ENCODE measurements at regions of chr5 and their contacts with region 1.

Region 1: DNA sequence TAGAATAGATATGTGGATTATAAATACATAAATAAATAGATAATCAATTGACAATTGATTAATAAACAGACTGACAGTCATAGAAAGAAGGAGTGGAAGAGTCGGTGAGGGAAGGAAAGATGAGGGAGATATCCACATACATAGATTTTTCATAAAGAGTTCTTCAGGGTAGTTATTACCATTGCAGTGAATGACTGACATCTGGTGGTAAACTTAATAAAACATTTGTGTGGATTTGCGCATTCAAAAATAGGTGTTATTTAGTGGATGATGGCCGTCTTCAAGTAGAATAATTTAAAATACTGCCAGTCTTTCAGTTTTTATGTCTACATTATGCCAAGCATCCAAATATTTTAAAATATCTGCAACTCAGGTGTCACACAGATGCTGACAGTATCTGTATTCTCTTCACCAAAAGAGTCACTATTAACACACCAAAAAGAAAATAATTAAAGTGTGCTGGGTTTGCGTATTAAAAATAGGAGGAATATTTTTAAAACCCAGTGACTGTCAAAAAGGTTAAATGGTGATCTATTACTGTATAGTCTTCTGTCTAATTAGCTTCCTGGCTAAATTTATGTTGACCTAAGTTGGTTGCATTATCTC is 78.8 kb downstream of the GIN1 start:
- DNase-seq: no peak
- H3K4me3 ChIP-seq: no peak overlapping the region
- H3K27ac ChIP-seq: no peak overlapping the region
- H3K4me1 ChIP-seq: peaks cover 0 to 3% of the 10 kb centered on the region in 2 donors
- H3K27me3 ChIP-seq: no peaks in the 10 kb centered on the region
- CTCF ChIP-seq: peak; percentile 31 to 75 (median 56)
- POLR2A ChIP-seq: no peak

Region 2: DNA sequence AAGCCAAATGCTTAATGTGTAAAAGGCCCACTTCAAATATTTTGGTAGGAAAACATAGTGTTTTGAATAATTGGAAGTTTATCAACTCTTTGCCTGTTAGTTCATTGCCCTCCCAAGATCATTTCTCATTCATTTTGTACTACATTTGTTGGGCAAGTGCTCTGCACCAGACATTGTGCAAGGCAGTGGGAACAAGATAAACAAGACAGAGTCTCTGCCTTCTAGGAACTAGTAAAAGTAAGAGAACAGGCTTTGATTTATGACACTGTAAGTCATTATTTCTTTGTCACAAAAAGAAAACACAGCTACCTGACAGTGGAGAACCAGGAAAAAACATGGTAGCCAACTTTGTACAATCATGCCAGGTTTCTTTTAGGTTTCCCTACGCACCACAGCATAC is 349.7 kb before region 1 on chr5:
- intact Hi-C with region 1: loop called in 1 of 2 experiments (anchors 10 kb)
- DNase-seq: peak in 4 of 7 donors; percentile 18 to 61 (median 39)
- H3K4me3 ChIP-seq: no peak overlapping the region
- H3K27ac ChIP-seq: no peak overlapping the region
- H3K4me1 ChIP-seq: no peaks in the 10 kb centered on the region
- H3K27me3 ChIP-seq: no peaks in the 10 kb centered on the region
- CTCF ChIP-seq: no peak
- POLR2A ChIP-seq: no peak

Region 3: DNA sequence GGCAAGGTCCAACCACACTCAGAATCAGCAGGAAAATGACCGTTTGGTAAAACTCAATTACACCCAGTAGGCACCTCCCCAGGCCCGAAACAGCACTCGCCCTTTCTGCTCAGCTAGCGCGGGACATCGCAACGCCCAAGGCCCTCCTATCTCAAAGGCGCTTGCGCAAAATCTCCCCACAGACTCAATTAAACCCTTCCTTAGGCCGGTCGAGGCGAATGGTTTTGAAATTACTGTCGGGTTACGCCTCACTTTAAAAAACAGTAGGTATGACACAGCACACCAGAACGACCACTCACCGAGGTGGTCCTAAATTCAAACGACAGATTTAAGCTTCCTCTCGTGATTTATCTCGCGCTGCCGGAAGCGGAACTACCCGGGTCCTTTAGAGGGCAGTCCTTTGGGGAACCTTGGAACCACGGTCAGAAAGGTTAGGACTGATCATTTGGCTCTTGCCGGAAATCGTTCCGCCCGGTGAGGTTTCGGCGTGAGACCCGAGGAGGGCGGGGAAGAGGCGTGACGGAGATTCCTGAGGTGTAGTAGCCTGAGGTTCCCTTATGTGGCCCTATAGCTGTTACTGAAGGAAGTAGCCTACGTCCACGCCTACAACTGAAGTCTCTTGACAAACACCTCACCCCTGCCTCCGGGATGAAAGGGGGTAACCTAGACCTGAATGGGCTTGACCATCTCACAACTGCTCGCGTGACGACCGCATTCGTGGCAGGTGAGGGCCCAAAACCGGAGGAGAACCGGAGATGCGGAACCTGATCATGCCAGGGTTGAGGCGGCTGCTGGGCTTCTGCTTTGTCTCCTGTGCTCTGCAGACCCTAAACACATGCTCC is 78.8 kb after region 1 on chr5 and contains the starts of genes GIN1 and PPIP5K2:
- intact Hi-C with region 1: no loop called
- DNase-seq: peak; percentile 96 to 98 (median 97)
- H3K4me3 ChIP-seq: peak within 1 kb of the TSS; percentile 17 to 87 (median 58)
- H3K27ac ChIP-seq: peak within 1 kb of the TSS; percentile 35 to 97 (median 93)
- H3K4me1 ChIP-seq: peaks cover 13 to 29% of the 10 kb centered on the region in 2 donors
- H3K27me3 ChIP-seq: no peaks in the 10 kb centered on the region
- CTCF ChIP-seq: peak in 1 of 6 experiments; percentile 20
- POLR2A ChIP-seq: peak; percentile 52 to 74
- total RNA-seq, gene GIN1: 3.2 to 22.0 (median 9.2) TPM
- total RNA-seq, gene PPIP5K2: 16.1 to 86.5 (median 49.4) TPM

Region 4: GRCh38 chr5:103849934-103850333 is 808.8 kb after region 1 on chr5:
- intact Hi-C with region 1: no loop called
- DNase-seq: no peak
- H3K4me3 ChIP-seq: no peak overlapping the region
- H3K27ac ChIP-seq: no peak overlapping the region
- H3K4me1 ChIP-seq: no peaks in the 10 kb centered on the region
- H3K27me3 ChIP-seq: no peaks in the 10 kb centered on the region
- CTCF ChIP-seq: no peak
- POLR2A ChIP-seq: no peak